GM18951 (cell line): ENCODE measurements at regions of chr15 and their contacts with region 1.

Region 1: DNA sequence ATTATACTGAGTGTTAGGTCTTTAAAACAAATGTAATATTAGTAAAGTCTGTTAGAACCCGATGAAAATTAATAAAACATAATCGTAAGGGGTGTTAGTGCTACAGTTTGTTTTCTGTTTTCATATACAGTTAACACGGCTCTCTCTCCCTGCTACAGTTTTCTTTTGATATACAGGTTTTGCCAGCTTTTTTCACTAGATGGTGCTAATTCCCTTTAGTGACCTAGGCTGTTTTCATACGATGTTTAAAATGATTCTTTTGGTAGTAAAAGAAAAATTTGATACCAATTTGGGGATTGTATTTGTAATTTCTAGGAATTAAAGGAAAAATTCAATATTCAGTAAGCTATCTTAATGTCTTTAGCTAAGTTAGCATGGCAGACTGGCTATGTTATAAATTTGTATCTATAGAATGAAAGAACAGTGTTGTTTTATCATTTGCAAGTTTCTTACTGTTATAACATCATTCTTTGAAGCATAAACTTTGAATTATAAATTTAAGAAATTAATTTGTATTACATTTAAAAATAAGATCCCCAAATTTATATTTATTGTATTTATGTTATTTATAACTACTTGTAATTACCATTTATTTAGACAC is 11.5 kb downstream of the APH1B start:
- POLR2A ChIP-seq: no peak

Region 2: GRCh38 chr15:63135804-63136203 is 153.1 kb before region 1 on chr15:
- in situ Hi-C with region 1: no loop called
- POLR2A ChIP-seq: no peak

Region 3: DNA sequence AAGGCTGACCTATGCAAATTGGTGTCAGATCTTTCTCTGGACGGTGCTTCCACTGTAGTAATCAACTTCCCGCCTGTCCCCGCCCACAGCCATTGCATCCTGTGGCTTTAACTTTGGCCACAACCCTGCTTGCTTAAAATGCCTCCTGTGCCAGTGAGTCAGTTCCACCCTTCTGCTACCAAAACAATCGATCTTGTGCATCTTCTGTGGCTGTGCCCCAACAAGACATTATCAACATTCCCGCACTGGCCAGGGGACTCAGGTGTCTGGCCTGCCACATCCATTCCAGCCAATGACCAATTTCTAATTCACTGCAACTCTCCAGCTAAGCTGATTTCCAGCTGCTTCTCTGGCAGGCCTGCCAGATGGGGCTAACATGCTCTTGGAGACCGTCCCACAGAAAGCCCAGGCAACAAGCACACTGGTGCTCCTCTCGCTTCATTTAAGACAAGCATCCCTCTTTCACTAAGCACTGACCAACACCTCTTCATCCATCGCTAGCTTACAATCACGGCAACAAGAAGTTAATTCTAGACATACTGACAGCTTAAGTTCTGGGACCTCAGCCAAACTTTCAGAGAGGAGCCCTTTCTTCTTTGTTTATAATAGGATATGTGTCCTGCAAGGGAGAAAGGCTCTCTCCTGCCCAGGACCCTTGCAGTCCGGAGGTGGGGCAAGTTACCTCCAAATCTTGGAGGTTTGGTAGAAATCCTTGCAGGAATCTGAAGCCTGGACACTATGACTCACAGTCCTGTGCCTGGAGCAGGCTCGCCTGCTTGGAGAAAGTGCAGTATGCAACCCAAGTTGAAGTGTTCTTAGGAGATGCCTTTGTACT is 86.0 kb after region 1 on chr15:
- in situ Hi-C with region 1: no loop called
- POLR2A ChIP-seq: no peak

Region 4: GRCh38 chr15:63402498-63403253 is 113.8 kb after region 1 on chr15:
- in situ Hi-C with region 1: loop called (anchors 5 kb)
- POLR2A ChIP-seq: no peak